ENCODE measurements at regions of chr6 and their contacts with region 1.

Region 1: DNA sequence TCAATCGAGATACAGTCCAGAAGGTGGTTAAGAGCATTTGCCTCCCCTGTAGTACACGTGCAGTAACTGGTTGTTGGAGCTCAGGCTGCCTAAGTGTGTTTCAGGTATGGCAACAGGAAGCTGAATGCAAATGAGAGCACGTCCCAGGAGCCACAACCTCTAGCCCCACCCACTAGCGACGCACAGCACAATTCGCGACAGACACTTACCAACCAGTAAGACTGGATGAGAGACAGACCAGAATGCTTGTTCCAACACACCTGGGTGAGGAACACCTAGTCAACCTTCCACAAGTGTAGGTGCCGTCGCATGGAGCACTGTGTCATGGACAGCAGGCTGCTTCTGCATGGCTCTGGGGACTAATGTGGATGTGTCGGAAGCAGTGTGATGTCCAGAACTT is 7.2 kb upstream of the SERPINB1 start:
- DNase-seq: no peak
- H3K4me3 ChIP-seq: no peak overlapping the region
- H3K27ac ChIP-seq: no peak overlapping the region
- H3K4me1 ChIP-seq: peaks cover 0 to 13% (median 7%) of the 10 kb centered on the region in 4 donors
- H3K27me3 ChIP-seq: no peaks in the 10 kb centered on the region
- CTCF ChIP-seq: no peak
- EP300 ChIP-seq: no peak
- POLR2A ChIP-seq: no peak

Region 2: GRCh38 chr6:2791124-2791974 is 57.5 kb before region 1 on chr6:
- intact Hi-C with region 1: loop called (anchors 2 kb)
- DNase-seq: peak; percentile 83
- H3K4me3 ChIP-seq: peak overlapping the region in 2 of 4 donors; percentile 4 to 16
- H3K27ac ChIP-seq: peak overlapping the region; percentile 76 to 85 (median 81)
- H3K4me1 ChIP-seq: peaks cover 0 to 40% (median 27%) of the 10 kb centered on the region in 4 donors
- H3K27me3 ChIP-seq: no peaks in the 10 kb centered on the region
- CTCF ChIP-seq: peak; percentile 61 to 82 (median 70)
- EP300 ChIP-seq: no peak
- POLR2A ChIP-seq: no peak

Region 3: GRCh38 chr6:2916158-2916925 is 67.5 kb after region 1 on chr6:
- intact Hi-C with region 1: no loop called
- DNase-seq: no peak
- H3K4me3 ChIP-seq: no peak overlapping the region
- H3K27ac ChIP-seq: no peak overlapping the region
- H3K4me1 ChIP-seq: no peaks in the 10 kb centered on the region
- H3K27me3 ChIP-seq: no peaks in the 10 kb centered on the region
- CTCF ChIP-seq: no peak
- EP300 ChIP-seq: no peak
- POLR2A ChIP-seq: no peak